ENCODE measurements at regions of chr1 and their contacts with region 1.

Region 1: GRCh38 chr1:109783429-109783831 is 19.7 kb upstream of the EPS8L3 start:
- DNase-seq: no peak
- H3K4me3 ChIP-seq: no peak overlapping the region
- H3K4me3 Mint-ChIP-seq: no peak overlapping the region
- H3K27ac ChIP-seq: no peak overlapping the region
- H3K27ac Mint-ChIP-seq: no peak overlapping the region
- H3K4me1 ChIP-seq: peaks cover 0 to 4% of the 10 kb centered on the region in 2 donors
- H3K4me1 Mint-ChIP-seq: peaks cover 5% of the 10 kb centered on the region
- H3K27me3 ChIP-seq: no peaks in the 10 kb centered on the region
- H3K27me3 Mint-ChIP-seq: peaks cover 0 to 12% (median 0%) of the 10 kb centered on the region in 3 donors
- CTCF ChIP-seq: no peak

Region 2: DNA sequence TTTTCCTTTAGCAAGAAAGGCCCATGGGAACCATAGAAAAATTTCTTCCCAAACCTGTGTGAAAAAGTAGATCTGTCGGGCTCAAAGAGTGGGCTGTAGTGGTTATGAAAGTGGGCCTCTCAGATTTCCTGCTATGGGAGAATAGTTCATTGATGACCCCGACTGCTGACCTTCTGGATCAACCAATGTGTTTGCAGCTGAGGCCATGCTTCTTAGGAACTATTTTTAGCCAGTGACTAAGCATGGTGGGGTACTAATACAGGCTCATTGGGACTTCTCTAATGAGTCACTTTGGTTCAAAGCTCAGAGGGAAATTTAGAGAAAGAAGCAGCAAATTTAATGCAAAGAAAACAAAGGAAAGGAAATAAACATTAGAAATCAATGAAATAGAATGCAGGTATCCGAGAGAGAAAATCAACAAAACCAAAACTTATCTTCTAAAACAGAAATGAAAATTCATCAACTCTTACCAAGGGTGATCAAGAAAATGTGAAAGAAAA is 344.6 kb before region 1 on chr1:
- intact Hi-C with region 1: loop called in 1 of 2 experiments (anchors 5 kb)
- DNase-seq: peak in 2 of 3 donors; percentile 8 to 51
- H3K4me3 ChIP-seq: no peak overlapping the region
- H3K4me3 Mint-ChIP-seq: no peak overlapping the region
- H3K27ac ChIP-seq: no peak overlapping the region
- H3K27ac Mint-ChIP-seq: no peak overlapping the region
- H3K4me1 ChIP-seq: no peaks in the 10 kb centered on the region
- H3K4me1 Mint-ChIP-seq: no peaks in the 10 kb centered on the region
- H3K27me3 ChIP-seq: peaks cover 16 to 23% of the 10 kb centered on the region in 2 donors
- H3K27me3 Mint-ChIP-seq: peaks cover 2 to 9% (median 5%) of the 10 kb centered on the region in 3 donors
- CTCF ChIP-seq: no peak

Measured in CD14-positive monocyte (primary cell).